Activated naive CD4-positive, alpha-beta T cell treated with anti-CD3 and anti-CD28 coated beads for 36 hours (primary cell): ENCODE measurements at regions of chr6 and their contacts with region 1.

Region 1: DNA sequence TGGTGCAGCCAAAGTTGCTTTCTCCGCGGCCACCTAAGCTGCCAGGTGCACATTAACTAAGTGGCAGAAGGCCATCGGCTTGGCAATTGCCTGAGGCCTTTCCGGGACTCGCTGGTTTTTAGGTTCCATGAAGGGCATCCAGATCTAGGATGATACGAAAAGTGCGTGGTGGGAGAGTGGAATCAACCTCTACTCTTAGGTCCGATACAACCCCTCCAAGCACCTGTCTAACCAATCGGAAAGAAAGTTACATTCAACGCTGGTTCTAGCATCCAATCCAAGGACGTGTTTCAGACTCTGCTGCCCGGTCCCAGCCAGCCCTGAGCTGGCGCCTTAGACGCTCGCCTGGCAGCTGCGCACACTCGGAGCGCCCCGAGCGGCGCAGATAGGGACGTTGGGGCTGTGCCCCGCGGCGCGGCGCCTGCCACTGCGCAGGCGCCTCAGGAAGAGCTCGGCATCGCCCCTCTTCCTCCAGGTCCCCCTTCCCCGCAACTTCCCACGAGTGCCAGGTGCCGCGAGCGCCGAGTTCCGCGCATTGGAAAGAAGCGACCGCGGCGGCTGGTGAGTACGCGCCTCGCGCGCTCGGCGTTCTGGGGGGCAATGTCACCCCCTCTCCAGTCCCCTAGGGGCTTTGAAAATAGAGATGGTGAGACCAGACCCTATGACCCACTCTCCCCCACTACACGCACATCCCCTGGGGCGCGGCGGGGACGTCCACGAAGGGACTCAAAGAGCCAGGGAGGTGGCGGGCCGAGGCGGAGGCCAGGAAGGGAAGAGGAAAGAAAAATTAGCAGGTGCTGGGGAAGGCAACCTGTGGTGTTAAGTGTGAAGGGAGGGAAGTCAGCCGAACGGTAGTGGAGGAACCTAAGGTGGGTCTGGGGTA is at the start of gene ENPP4:
- DNase-seq: peak; percentile 91
- H3K4me3 Mint-ChIP-seq: peak within 1 kb of the TSS; percentile 92
- H3K27ac Mint-ChIP-seq: peak within 1 kb of the TSS; percentile 77
- H3K4me1 Mint-ChIP-seq: peaks cover 27% of the 10 kb centered on the region
- H3K27me3 Mint-ChIP-seq: no peaks in the 10 kb centered on the region
- total RNA-seq, gene ENPP4: 7.7 to 8.0 TPM

Region 2: GRCh38 chr6:45791211-45792168 is 338.4 kb before region 1 on chr6:
- CTCF ChIA-PET with region 1: no interaction called
- intact Hi-C with region 1: no loop called
- DNase-seq: no peak
- H3K4me3 Mint-ChIP-seq: no peak overlapping the region
- H3K27ac Mint-ChIP-seq: no peak overlapping the region
- H3K4me1 Mint-ChIP-seq: peaks cover 3% of the 10 kb centered on the region
- H3K27me3 Mint-ChIP-seq: peaks cover 2% of the 10 kb centered on the region

Region 3: DNA sequence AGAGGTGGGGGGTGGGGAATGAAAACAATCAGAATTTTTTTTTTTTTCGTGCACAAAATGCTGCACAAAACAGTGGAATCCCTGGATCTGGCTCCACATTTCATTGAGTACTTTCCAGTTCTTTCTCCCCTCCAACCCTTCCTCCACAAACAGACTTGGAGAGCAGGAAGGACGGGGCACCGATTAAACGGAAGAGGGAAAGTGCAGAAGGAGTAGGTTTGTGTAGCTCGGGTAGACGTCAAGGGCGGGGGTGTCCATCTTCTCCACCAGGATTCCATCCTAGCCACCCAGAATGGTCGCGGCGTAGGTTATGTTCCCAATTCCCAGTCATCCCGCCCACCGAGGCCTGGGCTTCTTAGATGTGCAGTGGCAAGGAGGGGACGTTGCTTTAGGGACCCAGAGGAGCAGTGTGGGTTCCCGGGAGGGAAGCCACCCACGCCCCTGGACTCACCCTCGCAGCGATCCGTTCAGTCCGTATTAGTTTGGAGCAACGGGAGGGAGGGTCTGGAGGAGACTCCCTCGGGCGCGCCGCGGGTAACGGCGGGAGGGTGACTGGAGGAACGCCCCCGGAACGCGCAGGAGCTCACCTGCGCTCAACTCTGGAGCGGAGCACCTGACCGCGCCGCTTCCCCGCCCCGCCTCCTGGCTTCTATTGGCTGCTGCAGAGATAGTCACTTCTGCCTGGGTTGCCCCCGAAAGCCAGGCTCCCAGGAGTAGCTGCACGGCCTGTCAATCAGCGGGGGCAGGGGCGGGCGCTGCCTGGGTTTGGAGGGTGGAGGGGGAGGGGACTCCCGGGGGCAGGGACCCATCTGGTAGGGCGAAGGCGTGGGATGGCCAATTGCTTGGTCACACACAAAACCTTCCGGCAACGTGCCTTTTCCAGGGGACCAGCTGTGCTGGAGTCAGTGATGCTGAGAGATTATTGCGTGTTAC is 40.8 kb after region 1 on chr6 and contains the start of gene ENPP5:
- CTCF ChIA-PET with region 1: no interaction called
- intact Hi-C with region 1: loop called (anchors 1 kb)
- DNase-seq: peak; percentile 82
- H3K4me3 Mint-ChIP-seq: peak within 1 kb of the TSS; percentile 77
- H3K27ac Mint-ChIP-seq: no peak within 1 kb of the TSS
- H3K4me1 Mint-ChIP-seq: peaks cover 12% of the 10 kb centered on the region
- H3K27me3 Mint-ChIP-seq: peaks cover 27% of the 10 kb centered on the region
- total RNA-seq, gene ENPP5: 0.24 to 0.62 TPM

Region 4: GRCh38 chr6:46269447-46270229 is 139.8 kb after region 1 on chr6:
- CTCF ChIA-PET with region 1: no interaction called
- intact Hi-C with region 1: no loop called
- DNase-seq: no peak
- H3K4me3 Mint-ChIP-seq: no peak overlapping the region
- H3K27ac Mint-ChIP-seq: no peak overlapping the region
- H3K4me1 Mint-ChIP-seq: no peaks in the 10 kb centered on the region
- H3K27me3 Mint-ChIP-seq: no peaks in the 10 kb centered on the region

Region 5: DNA sequence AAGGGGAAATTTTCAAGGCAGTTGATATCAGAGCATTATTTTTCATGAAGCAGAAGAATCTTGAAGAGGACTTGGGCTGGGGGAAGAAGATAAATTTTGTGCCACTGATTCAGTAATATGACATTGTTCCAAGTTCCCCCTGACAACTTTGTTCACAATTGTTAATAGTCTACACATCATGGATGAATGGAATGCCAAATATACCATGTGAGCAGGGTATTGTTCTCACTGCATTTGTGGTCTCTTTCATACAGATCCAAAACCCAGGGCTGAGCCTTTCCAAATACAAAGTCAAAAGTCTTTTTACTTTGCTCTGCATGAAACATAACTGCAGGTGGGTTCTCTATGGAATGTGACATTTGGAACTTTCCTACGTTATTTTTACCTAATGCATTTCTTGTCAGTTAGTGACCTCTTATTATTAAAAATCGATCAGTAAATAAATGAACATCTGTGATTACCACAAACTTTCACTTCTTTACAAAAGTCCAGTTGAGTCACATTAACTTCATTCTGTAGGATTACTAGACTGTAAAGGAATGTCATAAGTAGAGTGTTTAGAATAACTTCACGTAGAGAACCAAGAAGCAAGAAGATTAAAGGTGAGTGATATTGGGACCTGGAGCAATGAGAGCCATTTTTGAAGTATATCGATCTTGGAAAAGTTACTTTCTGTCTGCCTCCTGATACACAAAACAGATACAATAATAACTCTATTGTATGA is 260.4 kb after region 1 on chr6:
- CTCF ChIA-PET with region 1: no interaction called
- intact Hi-C with region 1: no loop called
- DNase-seq: no peak
- H3K4me3 Mint-ChIP-seq: no peak overlapping the region
- H3K27ac Mint-ChIP-seq: no peak overlapping the region
- H3K4me1 Mint-ChIP-seq: no peaks in the 10 kb centered on the region
- H3K27me3 Mint-ChIP-seq: peaks cover 8% of the 10 kb centered on the region

Region 6: DNA sequence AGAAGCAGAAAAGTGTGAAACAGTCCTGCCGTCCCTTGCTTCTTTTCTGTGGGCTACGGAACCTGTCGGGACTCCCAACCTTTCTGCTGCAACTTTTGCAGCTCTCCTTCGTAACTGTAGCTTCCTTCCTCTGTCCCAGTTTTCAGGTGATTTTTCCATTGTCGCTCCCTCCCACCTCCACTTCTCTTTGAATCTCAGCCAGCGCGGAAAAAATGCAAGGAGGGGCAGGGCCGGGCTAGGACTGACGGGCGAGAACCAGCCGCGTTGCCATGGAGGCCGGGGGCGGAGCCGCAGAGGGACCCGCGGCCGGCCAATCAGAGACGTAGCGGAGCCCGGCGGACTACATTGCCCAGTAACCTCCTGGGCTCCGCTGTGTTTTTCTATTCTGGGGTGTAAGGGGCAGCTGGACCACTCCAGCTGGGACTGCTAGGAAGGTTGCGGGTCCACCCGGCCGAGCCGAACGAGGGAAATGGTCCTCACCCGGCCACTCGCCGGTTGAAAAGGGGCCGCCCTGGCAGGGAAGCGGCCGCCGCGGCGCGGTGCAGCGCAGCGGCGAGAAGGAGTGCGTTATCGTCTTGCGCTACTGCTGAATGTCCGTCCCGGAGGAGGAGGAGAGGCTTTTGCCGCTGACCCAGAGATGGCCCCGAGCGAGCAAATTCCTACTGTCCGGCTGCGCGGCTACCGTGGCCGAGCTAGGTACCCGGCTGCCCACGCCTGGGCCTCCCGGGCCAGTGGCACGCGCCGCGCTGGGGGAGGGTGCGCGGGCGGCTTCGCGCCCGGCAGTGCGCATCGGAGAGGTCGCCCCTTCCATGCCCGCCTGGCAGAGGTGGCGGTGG is 523.0 kb after region 1 on chr6 and contains the starts of genes CYP39A1 and SLC25A27:
- CTCF ChIA-PET with region 1: no interaction called
- intact Hi-C with region 1: loop called (anchors 1 kb)
- DNase-seq: peak; percentile 88
- H3K4me3 Mint-ChIP-seq: peak within 1 kb of the TSS; percentile 88
- H3K27ac Mint-ChIP-seq: peak within 1 kb of the TSS; percentile 11
- H3K4me1 Mint-ChIP-seq: peaks cover 13% of the 10 kb centered on the region
- H3K27me3 Mint-ChIP-seq: peaks cover 39% of the 10 kb centered on the region
- total RNA-seq, gene CYP39A1: not detected
- total RNA-seq, gene SLC25A27: 1.6 to 2.0 TPM